A673 (cell line): ENCODE measurements at regions of chr6 and their contacts with region 1.

Region 1: DNA sequence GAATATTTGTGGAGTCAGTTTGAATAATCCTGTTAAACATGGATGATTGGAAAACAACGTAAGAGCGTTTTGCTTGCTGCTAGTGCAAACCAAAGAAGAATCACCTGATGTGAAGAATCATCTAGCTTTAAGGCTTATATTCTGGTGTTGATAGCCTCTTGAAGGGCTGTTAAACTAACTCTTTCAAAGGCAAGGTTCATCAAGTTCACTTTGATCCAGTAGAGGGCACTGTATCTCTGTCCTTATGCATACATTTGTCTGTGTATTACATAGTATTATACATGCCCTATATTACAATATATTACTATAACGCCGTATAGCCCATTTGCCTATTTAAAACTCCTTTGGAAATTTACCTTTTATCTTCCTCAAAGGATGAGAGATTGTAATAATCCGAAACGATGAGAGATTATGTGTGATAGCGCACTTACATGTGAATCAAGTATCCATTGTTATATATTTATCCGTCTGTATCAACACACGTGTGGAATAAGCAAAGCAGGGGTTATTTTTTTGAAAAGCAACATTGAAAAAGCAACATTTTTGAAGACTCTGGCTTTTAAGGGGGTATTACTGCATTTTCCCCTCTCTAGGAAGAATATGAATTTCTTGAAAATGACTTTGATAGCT is 50.8 kb upstream of the NRN1 start:
- DNase-seq: peak; percentile 77
- H3K4me3 ChIP-seq: no peak overlapping the region
- H3K27ac ChIP-seq: no peak overlapping the region
- H3K4me1 ChIP-seq: no peaks in the 10 kb centered on the region
- H3K27me3 ChIP-seq: peaks cover 8% of the 10 kb centered on the region
- CTCF ChIP-seq: peak; percentile 72

Region 2: DNA sequence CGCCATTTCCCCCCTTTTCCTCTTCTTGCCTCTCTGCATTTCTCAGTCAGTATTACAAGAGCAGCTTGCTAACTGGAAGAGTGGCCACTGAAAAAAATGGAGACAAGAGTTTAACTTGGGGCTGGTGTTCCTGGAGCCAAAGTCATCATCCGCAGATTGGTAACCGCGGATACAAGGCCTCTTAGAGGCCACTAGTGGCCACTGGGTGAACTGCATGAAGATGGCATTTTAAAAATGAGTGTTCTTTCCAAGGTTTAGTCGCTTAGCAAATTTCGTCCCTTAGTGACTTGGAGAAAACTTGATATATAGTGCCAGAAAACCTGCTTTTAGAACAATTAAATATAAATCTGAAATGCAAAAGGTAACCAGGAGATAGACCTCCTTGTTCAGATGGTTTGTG is 258.1 kb after region 1 on chr6:
- CTCF ChIA-PET with region 1: no interaction called
- POLR2A ChIA-PET with region 1: no interaction called
- intact Hi-C with region 1: loop called (anchors 10 kb)
- DNase-seq: peak; percentile 77
- H3K4me3 ChIP-seq: no peak overlapping the region
- H3K27ac ChIP-seq: no peak overlapping the region
- H3K4me1 ChIP-seq: no peaks in the 10 kb centered on the region
- H3K27me3 ChIP-seq: peaks cover 46% of the 10 kb centered on the region
- CTCF ChIP-seq: peak; percentile 82

Region 3: GRCh38 chr6:6494677-6495076 is 437.1 kb after region 1 on chr6:
- CTCF ChIA-PET with region 1: interaction called, 8 read pairs
- POLR2A ChIA-PET with region 1: no interaction called
- intact Hi-C with region 1: loop called (anchors 1 kb)
- DNase-seq: peak; percentile 83
- H3K4me3 ChIP-seq: no peak overlapping the region
- H3K27ac ChIP-seq: no peak overlapping the region
- H3K4me1 ChIP-seq: no peaks in the 10 kb centered on the region
- H3K27me3 ChIP-seq: no peaks in the 10 kb centered on the region
- CTCF ChIP-seq: peak; percentile 89

Region 4: GRCh38 chr6:6547110-6547879 is 489.8 kb after region 1 on chr6:
- CTCF ChIA-PET with region 1: interaction called, 8 read pairs
- POLR2A ChIA-PET with region 1: no interaction called
- intact Hi-C with region 1: loop called (anchors 1 kb)
- DNase-seq: peak; percentile 87
- H3K4me3 ChIP-seq: peak overlapping the region; percentile 37
- H3K27ac ChIP-seq: no peak overlapping the region
- H3K4me1 ChIP-seq: peaks cover 6% of the 10 kb centered on the region
- H3K27me3 ChIP-seq: no peaks in the 10 kb centered on the region
- CTCF ChIP-seq: peak; percentile 91